ENCODE measurements at regions of chr3 and their contacts with region 1.

Region 1: GRCh38 chr3:9994086-9994844 is 7.6 kb upstream of the EMC3 start:
- DNase-seq: peak; percentile 93
- H3K4me3 Mint-ChIP-seq: peak overlapping the region; percentile 71
- H3K27ac Mint-ChIP-seq: peak overlapping the region; percentile 92
- H3K4me1 Mint-ChIP-seq: peaks cover 18% of the 10 kb centered on the region
- H3K27me3 Mint-ChIP-seq: no peaks in the 10 kb centered on the region
- CTCF ChIP-seq: no peak

Region 2: GRCh38 chr3:9569054-9569453 is 425.2 kb before region 1 on chr3:
- CTCF ChIA-PET with region 1: no interaction called
- POLR2A ChIA-PET with region 1: no interaction called
- intact Hi-C with region 1: no loop called
- DNase-seq: no peak
- H3K4me3 Mint-ChIP-seq: no peak overlapping the region
- H3K27ac Mint-ChIP-seq: no peak overlapping the region
- H3K4me1 Mint-ChIP-seq: no peaks in the 10 kb centered on the region
- H3K27me3 Mint-ChIP-seq: peaks cover 35% of the 10 kb centered on the region
- CTCF ChIP-seq: no peak

Region 3: GRCh38 chr3:9957214-9957613 is 37.1 kb before region 1 on chr3:
- CTCF ChIA-PET with region 1: interaction called, 3 read pairs
- POLR2A ChIA-PET with region 1: interaction called, 3 read pairs
- intact Hi-C with region 1: loop called (anchors 5 kb)
- DNase-seq: no peak
- H3K4me3 Mint-ChIP-seq: no peak overlapping the region
- H3K27ac Mint-ChIP-seq: no peak overlapping the region
- H3K4me1 Mint-ChIP-seq: no peaks in the 10 kb centered on the region
- H3K27me3 Mint-ChIP-seq: no peaks in the 10 kb centered on the region
- CTCF ChIP-seq: peak; percentile 16

Region 4: GRCh38 chr3:10026084-10026890 is 32.0 kb after region 1 on chr3 and contains the start of gene FANCD2:
- CTCF ChIA-PET with region 1: no interaction called
- POLR2A ChIA-PET with region 1: interaction called, 19 read pairs
- intact Hi-C with region 1: loop called (anchors 5 kb)
- DNase-seq: peak; percentile 85
- H3K4me3 Mint-ChIP-seq: peak within 1 kb of the TSS; percentile 88
- H3K27ac Mint-ChIP-seq: peak within 1 kb of the TSS; percentile 87
- H3K4me1 Mint-ChIP-seq: peaks cover 11% of the 10 kb centered on the region
- H3K27me3 Mint-ChIP-seq: no peaks in the 10 kb centered on the region
- CTCF ChIP-seq: no peak
- total RNA-seq, gene FANCD2: 14.6 and 24.6 TPM in 2 replicates

Measured in MCF 10A (cell line).